CD8-positive, alpha-beta T cell (primary cell): ENCODE measurements at regions of chr12 and their contacts with region 1.

Region 1: GRCh38 chr12:122123051-122123760 is 44.6 kb downstream of the MLXIP start:
- DNase-seq: peak; percentile 48 to 82 (median 75)
- ATAC-seq: peak; percentile 77
- H3K4me3 ChIP-seq: no peak overlapping the region
- H3K4me3 Mint-ChIP-seq: peak overlapping the region; percentile 54
- H3K27ac ChIP-seq: no peak overlapping the region
- H3K27ac Mint-ChIP-seq: peak overlapping the region; percentile 90
- H3K4me1 ChIP-seq: peaks cover 36% of the 10 kb centered on the region
- H3K4me1 Mint-ChIP-seq: peaks cover 55% of the 10 kb centered on the region
- H3K27me3 ChIP-seq: no peaks in the 10 kb centered on the region
- H3K27me3 Mint-ChIP-seq: no peaks in the 10 kb centered on the region
- CTCF ChIP-seq: peak; percentile 87

Region 2: GRCh38 chr12:122051231-122051876 is 71.9 kb before region 1 on chr12:
- CTCF ChIA-PET with region 1: interaction called, 239 read pairs
- POLR2A ChIA-PET with region 1: interaction called, 10 read pairs
- intact Hi-C with region 1: loop called (anchors 1 kb)
- DNase-seq: no peak
- ATAC-seq: no peak
- H3K4me3 ChIP-seq: no peak overlapping the region
- H3K4me3 Mint-ChIP-seq: no peak overlapping the region
- H3K27ac ChIP-seq: no peak overlapping the region
- H3K27ac Mint-ChIP-seq: no peak overlapping the region
- H3K4me1 ChIP-seq: peaks cover 4% of the 10 kb centered on the region
- H3K4me1 Mint-ChIP-seq: peaks cover 7% of the 10 kb centered on the region
- H3K27me3 ChIP-seq: no peaks in the 10 kb centered on the region
- H3K27me3 Mint-ChIP-seq: no peaks in the 10 kb centered on the region
- CTCF ChIP-seq: no peak

Region 3: GRCh38 chr12:122078141-122079032 is 44.8 kb before region 1 on chr12 and contains the start of gene MLXIP:
- CTCF ChIA-PET with region 1: interaction called, 38 read pairs
- POLR2A ChIA-PET with region 1: interaction called, 4 read pairs
- intact Hi-C with region 1: loop called (anchors 1 to 2 kb)
- DNase-seq: peak; percentile 68 to 94 (median 90)
- ATAC-seq: peak; percentile 72
- H3K4me3 ChIP-seq: peak within 1 kb of the TSS; percentile 68 to 91
- H3K4me3 Mint-ChIP-seq: peak within 1 kb of the TSS; percentile 91
- H3K27ac ChIP-seq: peak within 1 kb of the TSS; percentile 53 to 82
- H3K27ac Mint-ChIP-seq: peak within 1 kb of the TSS; percentile 91
- H3K4me1 ChIP-seq: peaks cover 32% of the 10 kb centered on the region
- H3K4me1 Mint-ChIP-seq: peaks cover 43% of the 10 kb centered on the region
- H3K27me3 ChIP-seq: no peaks in the 10 kb centered on the region
- H3K27me3 Mint-ChIP-seq: no peaks in the 10 kb centered on the region
- CTCF ChIP-seq: no peak
- total RNA-seq, gene MLXIP: 117 to 132 TPM

Region 4: GRCh38 chr12:122097927-122098756 is 25.1 kb before region 1 on chr12:
- CTCF ChIA-PET with region 1: interaction called, 50 read pairs
- POLR2A ChIA-PET with region 1: no interaction called
- intact Hi-C with region 1: no loop called
- DNase-seq: peak in 1 of 9 experiments; percentile 40
- ATAC-seq: peak; percentile 49
- H3K4me3 ChIP-seq: peak overlapping the region in 1 of 2 experiments; percentile 2
- H3K4me3 Mint-ChIP-seq: peak overlapping the region; percentile 70
- H3K27ac ChIP-seq: peak overlapping the region; percentile 11 to 63
- H3K27ac Mint-ChIP-seq: peak overlapping the region; percentile 93
- H3K4me1 ChIP-seq: peaks cover 86% of the 10 kb centered on the region
- H3K4me1 Mint-ChIP-seq: peaks cover 65% of the 10 kb centered on the region
- H3K27me3 ChIP-seq: no peaks in the 10 kb centered on the region
- H3K27me3 Mint-ChIP-seq: no peaks in the 10 kb centered on the region
- CTCF ChIP-seq: no peak

Region 5: DNA sequence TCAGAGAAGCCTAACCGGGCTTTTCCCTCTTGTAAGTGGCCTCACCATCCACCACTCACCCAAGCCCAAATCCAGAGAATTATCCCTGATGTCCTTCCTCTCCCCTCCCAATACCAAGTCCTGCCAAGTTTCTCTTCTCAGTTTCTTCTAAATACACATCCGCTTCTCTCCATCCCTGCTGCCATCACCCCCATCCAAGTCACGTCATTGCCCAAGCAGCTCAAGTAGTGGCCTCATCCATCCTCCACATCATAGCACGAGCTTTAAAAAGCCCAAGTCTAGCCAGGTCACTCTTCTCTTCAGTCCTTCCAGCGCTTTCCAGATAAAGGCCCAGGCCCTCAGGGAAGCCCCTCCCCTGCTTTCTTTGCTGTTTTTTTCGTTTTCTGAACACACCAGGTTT is 25.5 kb after region 1 on chr12:
- CTCF ChIA-PET with region 1: interaction called, 12 read pairs
- POLR2A ChIA-PET with region 1: no interaction called
- intact Hi-C with region 1: no loop called
- DNase-seq: no peak
- ATAC-seq: no peak
- H3K4me3 ChIP-seq: no peak overlapping the region
- H3K4me3 Mint-ChIP-seq: no peak overlapping the region
- H3K27ac ChIP-seq: no peak overlapping the region
- H3K27ac Mint-ChIP-seq: peak overlapping the region; percentile 57
- H3K4me1 ChIP-seq: no peaks in the 10 kb centered on the region
- H3K4me1 Mint-ChIP-seq: no peaks in the 10 kb centered on the region
- H3K27me3 ChIP-seq: no peaks in the 10 kb centered on the region
- H3K27me3 Mint-ChIP-seq: no peaks in the 10 kb centered on the region
- CTCF ChIP-seq: no peak

Region 6: DNA sequence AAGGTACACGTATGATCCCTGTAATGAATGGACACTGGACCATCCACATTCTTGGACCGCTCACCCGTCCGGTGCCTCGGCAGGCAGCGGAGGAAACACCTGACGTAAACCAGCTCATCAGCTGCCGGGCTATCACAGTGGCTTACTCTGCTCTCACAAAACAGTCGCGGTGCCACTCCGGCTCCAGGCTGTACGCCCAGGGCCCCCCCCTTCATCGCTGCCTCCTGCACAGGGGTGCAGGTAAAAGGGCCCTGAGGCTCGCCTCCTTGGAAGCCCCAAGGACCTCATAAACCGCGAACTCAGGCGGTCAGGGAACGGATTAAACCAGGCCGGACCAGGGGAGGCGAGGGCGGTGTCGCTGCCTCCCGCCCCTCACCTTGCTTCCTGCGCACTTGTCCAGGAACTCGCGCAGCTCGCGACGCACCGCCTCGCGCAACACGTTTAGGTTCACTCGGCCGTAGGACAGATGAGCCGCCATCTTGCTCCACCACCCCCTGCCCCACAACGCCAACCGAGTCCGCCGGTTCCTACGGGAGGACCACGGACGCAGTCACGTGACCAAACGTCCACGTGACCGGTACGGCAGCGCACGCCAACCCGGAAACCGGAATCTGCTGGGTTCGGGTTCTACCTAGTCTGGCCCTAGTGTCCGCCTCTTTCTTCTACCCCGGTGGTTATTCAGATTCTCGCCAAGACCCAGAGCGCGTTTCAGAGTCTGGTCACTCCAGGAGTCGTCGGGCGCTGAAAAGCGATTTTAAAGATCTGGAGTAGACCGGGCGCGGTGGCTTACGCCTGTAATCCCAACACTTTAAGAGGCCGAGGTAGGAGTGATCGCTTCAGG is 142.9 kb after region 1 on chr12 and contains the start of gene VPS33A:
- CTCF ChIA-PET with region 1: interaction called, 9 read pairs
- POLR2A ChIA-PET with region 1: no interaction called
- intact Hi-C with region 1: loop called in 1 of 2 experiments (anchors 10 kb)
- DNase-seq: peak; percentile 82 to 97 (median 92)
- ATAC-seq: peak; percentile 72
- H3K4me3 ChIP-seq: peak within 1 kb of the TSS; percentile 89 to 95
- H3K4me3 Mint-ChIP-seq: peak within 1 kb of the TSS; percentile 97
- H3K27ac ChIP-seq: peak within 1 kb of the TSS; percentile 95 to 96
- H3K27ac Mint-ChIP-seq: peak within 1 kb of the TSS; percentile 100
- H3K4me1 ChIP-seq: peaks cover 9% of the 10 kb centered on the region
- H3K4me1 Mint-ChIP-seq: peaks cover 36% of the 10 kb centered on the region
- H3K27me3 ChIP-seq: no peaks in the 10 kb centered on the region
- H3K27me3 Mint-ChIP-seq: no peaks in the 10 kb centered on the region
- CTCF ChIP-seq: no peak
- total RNA-seq, gene VPS33A: 11.6 to 13.1 TPM

Region 7: DNA sequence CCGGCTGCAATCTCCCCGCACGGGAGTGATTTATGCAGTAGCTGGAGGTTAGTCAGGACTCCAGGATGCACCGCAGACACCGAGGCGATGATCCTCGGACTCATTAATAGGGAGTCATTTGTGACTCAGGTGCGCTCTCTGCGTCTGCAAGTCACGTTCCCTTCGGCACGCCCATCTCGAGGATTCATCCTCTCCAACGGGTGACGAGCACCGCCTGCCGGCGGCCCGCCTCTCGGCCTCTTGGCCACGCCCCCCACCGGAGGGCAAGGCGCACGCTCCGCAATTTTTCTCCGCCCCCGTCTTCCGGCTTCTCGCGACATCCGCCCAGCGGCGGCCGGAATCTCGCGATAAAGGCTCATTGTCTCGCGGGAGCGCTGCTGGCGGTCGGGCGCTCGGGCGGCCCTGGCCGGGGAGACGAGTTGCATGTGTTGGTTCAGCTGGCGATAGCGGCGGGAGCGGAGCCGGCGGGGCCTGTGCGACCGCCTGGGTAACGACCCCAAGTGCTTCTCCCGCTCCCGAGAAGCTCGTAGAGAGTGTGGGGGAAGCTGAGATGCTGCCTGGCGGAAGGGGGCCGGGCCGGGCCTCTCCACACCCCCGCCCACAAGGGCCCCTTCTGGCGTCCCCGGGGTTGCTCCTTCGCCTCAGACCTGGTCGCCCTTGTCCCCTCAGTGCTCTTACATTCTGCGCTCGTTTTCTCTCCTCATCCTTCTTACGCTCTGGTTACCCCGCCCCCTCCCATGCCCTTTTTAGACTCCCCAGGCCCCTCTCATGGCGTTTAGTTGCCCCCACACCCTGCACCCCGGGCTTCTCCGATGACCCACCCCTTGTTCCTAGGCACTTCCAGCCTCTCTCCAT is 629.5 kb after region 1 on chr12 and contains the start of gene DENR:
- CTCF ChIA-PET with region 1: no interaction called
- POLR2A ChIA-PET with region 1: no interaction called
- intact Hi-C with region 1: no loop called
- DNase-seq: peak; percentile 99
- ATAC-seq: peak; percentile 96
- H3K4me3 ChIP-seq: peak within 1 kb of the TSS; percentile 80 to 90
- H3K4me3 Mint-ChIP-seq: peak within 1 kb of the TSS; percentile 96
- H3K27ac ChIP-seq: peak within 1 kb of the TSS; percentile 87 to 94
- H3K27ac Mint-ChIP-seq: peak within 1 kb of the TSS; percentile 97
- H3K4me1 ChIP-seq: peaks cover 26% of the 10 kb centered on the region
- H3K4me1 Mint-ChIP-seq: peaks cover 47% of the 10 kb centered on the region
- H3K27me3 ChIP-seq: no peaks in the 10 kb centered on the region
- H3K27me3 Mint-ChIP-seq: no peaks in the 10 kb centered on the region
- CTCF ChIP-seq: peak; percentile 56
- total RNA-seq, gene DENR: 27.8 to 29.7 TPM